ENCODE measurements at regions of chr17 and their contacts with region 1.

Region 1: DNA sequence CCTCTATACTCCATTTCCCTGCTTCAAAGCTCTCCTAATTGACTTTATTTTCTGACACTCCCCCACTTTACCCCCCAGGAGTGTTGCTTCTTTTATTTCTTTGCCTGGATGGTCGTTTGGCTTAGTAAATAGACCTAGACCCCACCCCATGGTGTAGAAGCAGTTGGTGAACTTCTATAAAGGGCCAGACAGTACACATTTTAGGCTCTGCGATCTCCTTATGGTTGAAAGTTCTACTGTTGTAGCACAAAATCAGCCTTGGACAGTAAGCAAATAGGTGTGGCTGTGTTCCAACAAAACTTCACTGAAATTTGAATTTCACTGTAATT is 31.9 kb downstream of the ZNF287 start:
- DNase-seq: no peak
- ATAC-seq: no peak
- H3K4me3 ChIP-seq: no peak overlapping the region
- H3K4me3 Mint-ChIP-seq: peak overlapping the region; percentile 90 to 98 (median 96)
- H3K27ac ChIP-seq: peak overlapping the region; percentile 53
- H3K27ac Mint-ChIP-seq: peak overlapping the region; percentile 85 to 96 (median 93)
- H3K4me1 ChIP-seq: peaks cover 4 to 5% of the 10 kb centered on the region in 2 donors
- H3K4me1 Mint-ChIP-seq: peaks cover 6 to 23% (median 15%) of the 10 kb centered on the region in 7 donors
- H3K27me3 ChIP-seq: no peaks in the 10 kb centered on the region
- H3K27me3 Mint-ChIP-seq: peaks cover 0 to 4% (median 0%) of the 10 kb centered on the region in 5 donors

Region 2: DNA sequence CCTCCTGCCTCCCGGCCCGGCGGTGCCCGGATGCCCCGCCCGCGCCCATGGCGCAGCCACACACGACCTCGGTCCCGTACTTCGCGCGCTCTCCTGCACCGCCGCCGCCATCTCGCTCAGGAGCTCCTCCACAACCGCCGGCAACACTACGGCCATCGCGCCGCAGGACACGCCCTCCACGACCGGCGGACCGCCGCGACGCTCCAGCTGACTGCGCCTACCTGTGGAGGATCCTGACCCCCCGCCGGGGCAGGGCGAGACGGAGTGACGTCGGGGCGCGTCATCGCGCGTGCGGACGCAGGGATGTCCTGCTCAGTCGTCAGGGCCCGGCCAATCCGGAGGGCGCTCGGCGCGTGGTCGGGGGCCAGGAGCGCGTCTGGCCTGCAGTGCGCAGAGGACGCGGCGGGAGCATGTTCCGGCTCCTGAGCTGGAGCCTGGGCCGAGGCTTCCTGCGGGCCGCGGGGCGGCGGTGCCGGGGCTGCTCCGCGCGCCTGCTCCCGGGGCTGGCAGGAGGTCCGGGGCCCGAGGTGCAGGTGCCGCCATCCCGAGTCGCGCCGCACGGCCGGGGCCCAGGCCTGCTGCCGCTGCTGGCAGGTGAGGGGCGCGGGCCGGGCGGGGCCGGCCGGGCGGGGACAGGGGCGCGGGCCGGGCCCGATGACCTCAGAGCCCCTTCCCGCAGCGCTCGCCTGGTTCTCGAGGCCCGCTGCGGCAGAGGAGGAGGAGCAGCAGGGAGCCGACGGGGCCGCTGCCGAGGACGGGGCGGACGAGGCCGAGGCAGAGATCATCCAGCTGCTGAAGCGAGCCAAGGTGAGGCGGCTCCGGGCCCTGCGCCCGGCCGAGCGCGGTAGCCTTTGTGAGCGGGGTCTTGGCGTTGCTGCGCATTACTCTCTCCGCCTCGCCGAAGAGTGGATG is 537.4 kb before region 1 on chr17 and contains the starts of genes TTC19 and ZSWIM7:
- CTCF ChIA-PET with region 1: no interaction called
- POLR2A ChIA-PET with region 1: no interaction called
- intact Hi-C with region 1: loop called in 1 of 2 experiments (anchors 10 kb)
- DNase-seq: peak; percentile 84 to 95 (median 87)
- ATAC-seq: peak; percentile 93
- H3K4me3 ChIP-seq: peak within 1 kb of the TSS; percentile 88
- H3K4me3 Mint-ChIP-seq: peak within 1 kb of the TSS; percentile 87 to 97 (median 94)
- H3K27ac ChIP-seq: peak within 1 kb of the TSS; percentile 86
- H3K27ac Mint-ChIP-seq: peak within 1 kb of the TSS; percentile 91 to 99 (median 96)
- H3K4me1 ChIP-seq: peaks cover 11 to 16% of the 10 kb centered on the region in 2 donors
- H3K4me1 Mint-ChIP-seq: peaks cover 22 to 45% (median 41%) of the 10 kb centered on the region in 7 donors
- H3K27me3 ChIP-seq: no peaks in the 10 kb centered on the region
- H3K27me3 Mint-ChIP-seq: no peaks in the 10 kb centered on the region
- total RNA-seq, gene TTC19: 32.8 to 61.6 (median 37.4) TPM
- total RNA-seq, gene ZSWIM7: 10.0 to 39.6 (median 25.4) TPM

Region 3: GRCh38 chr17:16380640-16381495 is 156.2 kb before region 1 on chr17 and contains the start of gene UBB:
- CTCF ChIA-PET with region 1: no interaction called
- POLR2A ChIA-PET with region 1: interaction called, 7 read pairs
- intact Hi-C with region 1: loop called (anchors 1 kb)
- DNase-seq: peak; percentile 83 to 97 (median 94)
- ATAC-seq: peak; percentile 96
- H3K4me3 ChIP-seq: peak within 1 kb of the TSS; percentile 66
- H3K4me3 Mint-ChIP-seq: peak within 1 kb of the TSS; percentile 85 to 99 (median 95)
- H3K27ac ChIP-seq: peak within 1 kb of the TSS; percentile 86
- H3K27ac Mint-ChIP-seq: peak within 1 kb of the TSS; percentile 93 to 100 (median 97)
- H3K4me1 ChIP-seq: peaks cover 6 to 13% of the 10 kb centered on the region in 2 donors
- H3K4me1 Mint-ChIP-seq: peaks cover 22 to 48% (median 39%) of the 10 kb centered on the region in 7 donors
- H3K27me3 ChIP-seq: no peaks in the 10 kb centered on the region
- H3K27me3 Mint-ChIP-seq: peaks cover 0 to 5% (median 0%) of the 10 kb centered on the region in 5 donors
- total RNA-seq, gene UBB: 537 to 1,283 (median 621) TPM

Region 4: DNA sequence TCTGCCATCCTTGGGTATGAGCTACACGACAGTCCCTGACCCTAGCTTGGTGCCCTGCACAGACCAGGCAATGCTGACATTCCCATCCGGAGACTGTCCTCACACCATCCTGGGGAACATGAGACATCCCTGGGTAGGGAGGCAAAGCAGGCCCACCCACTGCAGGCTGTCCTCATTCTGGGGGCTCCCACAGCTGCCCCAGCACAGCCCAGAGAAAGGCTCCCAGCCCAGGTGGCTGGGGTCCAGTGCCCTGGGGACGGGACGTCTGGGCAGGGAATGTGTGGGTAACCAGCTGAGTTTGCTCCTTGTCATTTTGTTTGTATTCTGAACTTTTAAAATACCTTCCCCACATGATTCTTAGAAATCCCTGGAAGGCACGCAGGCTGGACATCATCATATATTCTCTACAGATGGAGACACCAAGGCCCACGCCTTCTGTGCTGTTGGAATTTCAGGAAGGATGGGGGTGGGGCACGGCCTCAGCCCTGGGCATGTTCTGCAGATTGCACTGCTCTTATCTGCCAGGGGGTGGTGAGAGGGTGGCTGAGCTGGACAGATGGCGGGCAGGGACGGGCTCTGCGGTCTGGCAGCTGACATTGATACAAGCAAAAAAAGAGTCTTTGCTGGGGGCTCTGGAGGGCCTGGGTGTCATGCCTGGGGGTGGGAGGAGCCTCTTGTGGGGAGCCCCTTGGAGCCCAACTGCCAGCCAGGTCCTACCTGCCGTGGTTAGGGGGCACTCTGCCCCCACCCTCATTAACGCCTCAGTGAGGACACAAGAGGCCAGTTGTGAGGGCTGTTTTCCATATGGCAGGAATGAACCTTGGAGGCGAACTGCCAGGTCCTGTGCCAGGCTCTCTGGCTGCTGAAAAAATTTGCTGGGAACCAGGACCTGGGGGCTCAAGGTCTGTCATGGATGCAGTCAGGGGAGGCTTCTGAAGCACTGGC is 73.5 kb before region 1 on chr17:
- CTCF ChIA-PET with region 1: no interaction called
- POLR2A ChIA-PET with region 1: no interaction called
- intact Hi-C with region 1: no loop called
- DNase-seq: no peak
- ATAC-seq: no peak
- H3K4me3 ChIP-seq: no peak overlapping the region
- H3K4me3 Mint-ChIP-seq: no peak overlapping the region
- H3K27ac ChIP-seq: no peak overlapping the region
- H3K27ac Mint-ChIP-seq: no peak overlapping the region
- H3K4me1 ChIP-seq: no peaks in the 10 kb centered on the region
- H3K4me1 Mint-ChIP-seq: peaks cover 0 to 4% (median 1%) of the 10 kb centered on the region in 7 donors
- H3K27me3 ChIP-seq: no peaks in the 10 kb centered on the region
- H3K27me3 Mint-ChIP-seq: no peaks in the 10 kb centered on the region

Region 5: GRCh38 chr17:16491703-16492612 is 45.1 kb before region 1 on chr17 and contains the start of gene LRRC75A:
- CTCF ChIA-PET with region 1: no interaction called
- POLR2A ChIA-PET with region 1: no interaction called
- intact Hi-C with region 1: loop called (anchors 1 to 5 kb)
- DNase-seq: peak; percentile 10 to 77 (median 38)
- ATAC-seq: peak; percentile 94
- H3K4me3 ChIP-seq: peak within 1 kb of the TSS; percentile 51
- H3K4me3 Mint-ChIP-seq: peak within 1 kb of the TSS; percentile 70 to 89 (median 81)
- H3K27ac ChIP-seq: no peak within 1 kb of the TSS
- H3K27ac Mint-ChIP-seq: peak within 1 kb of the TSS in 4 of 9 donors; percentile 28 to 80 (median 48)
- H3K4me1 ChIP-seq: peaks cover 7 to 9% of the 10 kb centered on the region in 2 donors
- H3K4me1 Mint-ChIP-seq: peaks cover 3 to 16% (median 11%) of the 10 kb centered on the region in 7 donors
- H3K27me3 ChIP-seq: no peaks in the 10 kb centered on the region
- H3K27me3 Mint-ChIP-seq: peaks cover 0 to 54% (median 0%) of the 10 kb centered on the region in 5 donors
- total RNA-seq, gene LRRC75A: 0.92 to 5.2 (median 3.8) TPM

Region 6: DNA sequence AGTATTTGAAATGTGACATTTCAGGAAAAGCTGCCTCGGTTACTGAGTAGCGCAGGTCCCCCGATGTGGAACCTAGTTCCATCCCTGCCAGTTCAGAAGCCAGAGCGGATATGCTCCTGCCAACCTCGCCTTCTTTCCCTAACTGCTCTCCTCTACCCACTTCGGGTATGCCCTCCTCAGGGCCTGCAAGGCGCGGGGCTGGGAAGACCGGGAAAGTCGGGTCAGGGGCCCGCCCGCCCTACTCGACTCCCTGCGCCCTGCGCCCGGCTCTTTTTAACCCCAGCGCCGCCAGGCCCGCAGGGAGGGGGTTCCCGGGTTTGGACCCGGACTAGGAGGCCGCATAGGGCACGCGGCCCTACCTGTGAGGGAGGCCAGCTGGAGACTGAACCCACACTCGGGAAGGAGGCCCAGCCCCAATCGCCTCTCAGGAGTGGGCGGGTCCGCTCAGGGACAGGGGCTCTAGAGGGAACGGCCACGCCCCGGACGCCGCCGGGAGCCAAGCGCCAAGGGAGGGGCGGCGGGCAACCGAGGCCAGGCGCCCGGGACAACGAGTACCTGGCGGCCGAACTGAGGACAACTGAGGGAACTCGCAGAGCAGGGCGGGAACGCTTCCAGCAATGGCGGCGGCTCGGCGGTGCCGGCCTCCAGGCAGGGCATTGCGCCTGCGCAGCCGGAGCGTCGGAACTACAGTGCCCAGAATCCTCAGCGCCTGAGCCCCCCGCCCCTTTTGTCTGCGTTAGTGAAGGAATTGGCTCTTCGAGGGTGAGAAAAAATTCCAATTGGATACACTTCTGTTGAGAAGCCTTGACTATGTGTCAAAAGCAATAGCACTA is 116.3 kb after region 1 on chr17 and contains the start of gene ZNF624:
- CTCF ChIA-PET with region 1: no interaction called
- POLR2A ChIA-PET with region 1: no interaction called
- intact Hi-C with region 1: loop called (anchors 1 kb)
- DNase-seq: peak; percentile 75 to 87 (median 84)
- ATAC-seq: peak; percentile 98
- H3K4me3 ChIP-seq: peak within 1 kb of the TSS; percentile 76
- H3K4me3 Mint-ChIP-seq: peak within 1 kb of the TSS; percentile 81 to 93 (median 89)
- H3K27ac ChIP-seq: peak within 1 kb of the TSS; percentile 78
- H3K27ac Mint-ChIP-seq: peak within 1 kb of the TSS; percentile 7 to 91 (median 78)
- H3K4me1 ChIP-seq: peaks cover 0 to 11% of the 10 kb centered on the region in 2 donors
- H3K4me1 Mint-ChIP-seq: peaks cover 6 to 25% (median 21%) of the 10 kb centered on the region in 7 donors
- H3K27me3 ChIP-seq: no peaks in the 10 kb centered on the region
- H3K27me3 Mint-ChIP-seq: peaks cover 0 to 13% (median 0%) of the 10 kb centered on the region in 5 donors
- total RNA-seq, gene ZNF624: 3.8 to 11.4 (median 6.7) TPM

Region 7: GRCh38 chr17:17280613-17281549 is 743.8 kb after region 1 on chr17 and contains the start of gene COPS3:
- CTCF ChIA-PET with region 1: no interaction called
- POLR2A ChIA-PET with region 1: no interaction called
- intact Hi-C with region 1: loop called in 1 of 2 experiments (anchors 1 kb)
- DNase-seq: peak; percentile 89 to 98 (median 95)
- ATAC-seq: peak; percentile 93
- H3K4me3 ChIP-seq: peak within 1 kb of the TSS; percentile 67
- H3K4me3 Mint-ChIP-seq: peak within 1 kb of the TSS; percentile 87 to 98 (median 94)
- H3K27ac ChIP-seq: peak within 1 kb of the TSS; percentile 95
- H3K27ac Mint-ChIP-seq: peak within 1 kb of the TSS; percentile 91 to 98 (median 94)
- H3K4me1 ChIP-seq: peaks cover 17 to 24% of the 10 kb centered on the region in 2 donors
- H3K4me1 Mint-ChIP-seq: peaks cover 22 to 48% (median 44%) of the 10 kb centered on the region in 7 donors
- H3K27me3 ChIP-seq: no peaks in the 10 kb centered on the region
- H3K27me3 Mint-ChIP-seq: peaks cover 0 to 4% (median 0%) of the 10 kb centered on the region in 5 donors
- total RNA-seq, gene COPS3: 44.7 to 98.7 (median 69.4) TPM